ENCODE measurements at regions of chr6 and their contacts with region 1.

Region 1: DNA sequence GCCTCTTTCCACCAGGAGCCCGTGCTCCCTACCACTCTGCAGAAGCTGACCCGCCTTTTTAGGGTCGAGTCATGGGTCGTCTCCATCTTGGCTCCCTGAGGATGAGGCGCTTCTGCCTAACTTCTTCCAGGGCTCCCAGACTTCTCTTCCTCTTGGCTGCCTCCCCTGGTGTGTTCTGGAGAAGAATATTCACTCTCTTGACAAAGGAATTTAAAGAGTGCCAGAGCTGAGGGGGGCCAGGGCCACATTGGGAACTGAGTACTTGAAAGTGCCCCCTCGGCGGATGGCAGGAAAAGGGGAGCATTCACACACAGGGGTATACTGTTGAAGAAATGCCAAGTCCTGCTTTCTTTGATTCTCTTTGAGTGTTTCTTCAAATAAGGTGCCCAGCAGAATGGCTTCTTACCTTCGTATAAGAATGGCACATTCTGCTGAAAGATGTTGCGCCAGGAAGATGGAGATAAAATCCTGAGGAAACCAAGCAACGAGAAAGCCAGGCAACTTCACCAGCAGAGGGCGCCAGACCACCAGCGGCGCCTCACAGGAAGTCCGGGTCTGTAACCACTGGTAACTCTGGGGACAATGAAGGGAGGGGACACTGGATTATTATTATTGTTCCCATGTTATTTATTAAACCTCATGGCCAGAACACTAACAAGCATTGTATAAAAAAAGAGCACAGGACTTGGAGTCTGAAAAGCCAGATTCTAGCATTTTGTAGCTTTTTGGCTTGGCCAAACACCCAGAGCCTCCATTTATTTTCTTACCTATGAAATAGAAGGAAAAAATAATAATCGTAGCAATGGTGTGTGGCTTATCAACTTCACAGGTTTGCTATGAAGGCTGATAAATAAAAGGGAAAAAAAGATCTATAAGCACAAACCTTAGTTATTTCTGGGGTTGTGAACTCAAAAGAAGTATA is 176.7 kb downstream of the HACE1 start:
- DNase-seq: peak; percentile 31 to 74 (median 63)
- ATAC-seq: peak; percentile 68
- H3K4me3 ChIP-seq: no peak overlapping the region
- H3K4me3 Mint-ChIP-seq: peak overlapping the region in 4 of 10 donors; percentile 5 to 40 (median 28)
- H3K27ac ChIP-seq: no peak overlapping the region
- H3K27ac Mint-ChIP-seq: peak overlapping the region in 1 of 9 donors; percentile 26
- H3K4me1 ChIP-seq: peaks cover 4 to 7% of the 10 kb centered on the region in 2 donors
- H3K4me1 Mint-ChIP-seq: peaks cover 8 to 24% (median 20%) of the 10 kb centered on the region in 7 donors
- H3K27me3 ChIP-seq: no peaks in the 10 kb centered on the region
- H3K27me3 Mint-ChIP-seq: no peaks in the 10 kb centered on the region

Region 2: GRCh38 chr6:104548297-104548696 is 134.7 kb before region 1 on chr6:
- CTCF ChIA-PET with region 1: no interaction called
- POLR2A ChIA-PET with region 1: no interaction called
- intact Hi-C with region 1: no loop called
- DNase-seq: no peak
- ATAC-seq: no peak
- H3K4me3 ChIP-seq: no peak overlapping the region
- H3K4me3 Mint-ChIP-seq: no peak overlapping the region
- H3K27ac ChIP-seq: no peak overlapping the region
- H3K27ac Mint-ChIP-seq: peak overlapping the region in 1 of 9 donors; percentile 6
- H3K4me1 ChIP-seq: no peaks in the 10 kb centered on the region
- H3K4me1 Mint-ChIP-seq: no peaks in the 10 kb centered on the region
- H3K27me3 ChIP-seq: no peaks in the 10 kb centered on the region
- H3K27me3 Mint-ChIP-seq: peaks cover 5 to 26% (median 14%) of the 10 kb centered on the region in 5 donors

Region 3: DNA sequence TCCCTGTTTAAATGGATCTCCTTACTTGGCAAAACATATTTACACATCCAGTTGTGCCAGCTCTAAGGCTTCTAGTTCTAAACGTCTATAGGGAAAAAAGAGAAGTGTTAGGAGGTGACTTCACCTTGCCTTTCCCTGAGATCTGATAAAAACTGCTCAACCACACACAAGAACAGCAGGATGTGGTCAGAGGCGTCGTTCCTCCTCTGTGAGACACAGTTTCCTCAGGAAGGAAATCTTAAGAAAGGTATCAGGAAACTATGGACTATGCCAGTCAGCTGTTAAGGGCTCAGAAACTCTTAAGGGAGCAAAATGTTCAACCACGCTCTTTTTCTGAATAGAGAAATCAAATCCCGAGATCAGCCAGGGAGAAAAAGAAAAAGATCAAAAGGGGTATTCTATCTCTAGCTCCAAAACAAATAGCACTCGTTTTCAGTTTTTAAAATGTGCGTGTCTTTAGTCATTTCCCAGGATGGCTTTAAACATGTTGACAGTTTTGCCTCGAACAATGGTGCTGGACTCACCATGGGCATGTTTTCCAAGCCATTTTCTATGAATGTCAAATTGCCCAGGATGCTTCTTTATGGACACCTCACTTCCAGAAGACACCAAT is 22.2 kb after region 1 on chr6:
- CTCF ChIA-PET with region 1: no interaction called
- POLR2A ChIA-PET with region 1: no interaction called
- intact Hi-C with region 1: loop called in 1 of 2 experiments (anchors 2 kb)
- DNase-seq: peak in 8 of 9 donors; percentile 20 to 66 (median 60)
- ATAC-seq: peak; percentile 87
- H3K4me3 ChIP-seq: peak overlapping the region; percentile 11
- H3K4me3 Mint-ChIP-seq: peak overlapping the region; percentile 64 to 88 (median 80)
- H3K27ac ChIP-seq: no peak overlapping the region
- H3K27ac Mint-ChIP-seq: peak overlapping the region; percentile 28 to 81 (median 66)
- H3K4me1 ChIP-seq: peaks cover 20 to 30% of the 10 kb centered on the region in 2 donors
- H3K4me1 Mint-ChIP-seq: peaks cover 27 to 54% (median 46%) of the 10 kb centered on the region in 7 donors
- H3K27me3 ChIP-seq: no peaks in the 10 kb centered on the region
- H3K27me3 Mint-ChIP-seq: no peaks in the 10 kb centered on the region

Region 4: GRCh38 chr6:104771258-104771832 is 88.4 kb after region 1 on chr6:
- CTCF ChIA-PET with region 1: interaction called, 36 read pairs
- POLR2A ChIA-PET with region 1: no interaction called
- intact Hi-C with region 1: loop called (anchors 1 kb)
- DNase-seq: peak in 6 of 9 donors; percentile 14 to 51 (median 42)
- ATAC-seq: peak; percentile 78
- H3K4me3 ChIP-seq: no peak overlapping the region
- H3K4me3 Mint-ChIP-seq: no peak overlapping the region
- H3K27ac ChIP-seq: no peak overlapping the region
- H3K27ac Mint-ChIP-seq: peak overlapping the region in 1 of 9 donors; percentile 29
- H3K4me1 ChIP-seq: no peaks in the 10 kb centered on the region
- H3K4me1 Mint-ChIP-seq: peaks cover 3 to 14% (median 9%) of the 10 kb centered on the region in 7 donors
- H3K27me3 ChIP-seq: no peaks in the 10 kb centered on the region
- H3K27me3 Mint-ChIP-seq: no peaks in the 10 kb centered on the region

Region 5: GRCh38 chr6:104859225-104860146 is 176.5 kb after region 1 on chr6 and contains the start of gene HACE1:
- CTCF ChIA-PET with region 1: no interaction called
- POLR2A ChIA-PET with region 1: no interaction called
- intact Hi-C with region 1: loop called in 1 of 2 experiments (anchors 5 kb)
- DNase-seq: peak; percentile 75 to 91 (median 89)
- ATAC-seq: peak; percentile 98
- H3K4me3 ChIP-seq: peak within 1 kb of the TSS; percentile 79
- H3K4me3 Mint-ChIP-seq: peak within 1 kb of the TSS; percentile 87 to 95 (median 92)
- H3K27ac ChIP-seq: peak within 1 kb of the TSS; percentile 69
- H3K27ac Mint-ChIP-seq: peak within 1 kb of the TSS; percentile 18 to 92 (median 86)
- H3K4me1 ChIP-seq: peaks cover 8 to 9% of the 10 kb centered on the region in 2 donors
- H3K4me1 Mint-ChIP-seq: peaks cover 10 to 30% (median 18%) of the 10 kb centered on the region in 7 donors
- H3K27me3 ChIP-seq: no peaks in the 10 kb centered on the region
- H3K27me3 Mint-ChIP-seq: peaks cover 3 to 20% (median 13%) of the 10 kb centered on the region in 5 donors
- total RNA-seq, gene HACE1: 11.4 to 17.1 (median 16.1) TPM

Region 6: GRCh38 chr6:105077596-105078385 is 394.8 kb after region 1 on chr6:
- CTCF ChIA-PET with region 1: no interaction called
- POLR2A ChIA-PET with region 1: no interaction called
- intact Hi-C with region 1: loop called (anchors 1 kb)
- DNase-seq: peak in 3 of 9 donors; percentile 2 to 3 (median 3)
- ATAC-seq: no peak
- H3K4me3 ChIP-seq: no peak overlapping the region
- H3K4me3 Mint-ChIP-seq: no peak overlapping the region
- H3K27ac ChIP-seq: no peak overlapping the region
- H3K27ac Mint-ChIP-seq: no peak overlapping the region
- H3K4me1 ChIP-seq: no peaks in the 10 kb centered on the region
- H3K4me1 Mint-ChIP-seq: no peaks in the 10 kb centered on the region
- H3K27me3 ChIP-seq: no peaks in the 10 kb centered on the region
- H3K27me3 Mint-ChIP-seq: peaks cover 4 to 33% (median 15%) of the 10 kb centered on the region in 5 donors

Measured in naive thymus-derived CD4-positive, alpha-beta T cell (primary cell).